ENCODE measurements at regions of chr2 and their contacts with region 1.

Region 1: GRCh38 chr2:38909872-38910271 is 20.2 kb downstream of the ARHGEF33 start:
- DNase-seq: no peak
- ATAC-seq: no peak
- H3K4me3 ChIP-seq: no peak overlapping the region
- H3K27ac ChIP-seq: no peak overlapping the region
- H3K4me1 ChIP-seq: no peaks in the 10 kb centered on the region
- H3K27me3 ChIP-seq: no peaks in the 10 kb centered on the region; a peak in 1 of 5 replicates
- CTCF ChIP-seq: no peak
- EP300 ChIP-seq: no peak
- POLR2A ChIP-seq: no peak
- RAD21 ChIP-seq: no peak

Region 2: DNA sequence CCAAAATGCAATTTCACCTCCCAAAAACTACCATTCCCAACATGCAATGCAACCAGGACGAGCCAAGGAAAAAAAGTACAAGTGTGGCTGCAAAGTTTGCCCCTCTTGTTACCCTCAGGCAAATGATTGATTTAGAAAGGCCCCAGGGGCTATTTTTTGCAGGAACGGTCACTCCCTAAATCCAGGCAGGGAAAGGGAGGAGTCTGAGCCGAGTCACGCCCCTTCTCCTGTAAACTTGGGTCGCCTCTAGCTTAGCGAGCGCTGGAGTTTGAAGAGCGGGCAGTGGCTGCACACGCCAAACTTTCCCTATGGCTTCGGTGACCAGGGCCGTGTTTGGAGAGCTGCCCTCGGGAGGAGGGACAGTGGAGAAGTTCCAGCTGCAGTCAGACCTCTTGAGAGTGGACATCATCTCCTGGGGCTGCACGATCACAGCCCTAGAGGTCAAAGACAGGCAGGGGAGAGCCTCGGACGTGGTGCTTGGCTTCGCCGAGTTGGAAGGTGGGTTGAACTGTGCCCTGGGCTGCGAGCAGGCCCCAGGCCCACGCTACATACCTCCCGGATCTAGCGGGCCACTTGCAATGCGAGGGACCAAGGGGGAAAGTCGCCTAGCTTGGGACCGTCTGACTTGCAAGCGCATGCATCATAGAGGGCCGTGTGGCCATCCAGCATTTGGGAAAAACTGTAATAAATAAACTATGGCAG is 243.9 kb before region 1 on chr2 and contains the start of gene GALM:
- CTCF ChIA-PET with region 1: no interaction called
- POLR2A ChIA-PET with region 1: no interaction called
- in situ Hi-C with region 1: no loop called
- intact Hi-C with region 1: no loop called
- DNase-seq: peak; percentile 80 to 89 (median 82)
- ATAC-seq: peak; percentile 91
- H3K4me3 ChIP-seq: peak within 1 kb of the TSS; percentile 64
- H3K27ac ChIP-seq: peak within 1 kb of the TSS; percentile 74
- H3K4me1 ChIP-seq: peaks cover 7 to 16% of the 10 kb centered on the region in 2 experiments; a peak in 4 of 5 replicates
- H3K27me3 ChIP-seq: no peaks in the 10 kb centered on the region
- CTCF ChIP-seq: no peak
- EP300 ChIP-seq: peak; percentile 62
- POLR2A ChIP-seq: peak; percentile 65
- RAD21 ChIP-seq: no peak
- polyA plus RNA-seq, gene GALM: 38.0 to 51.7 TPM

Region 3: DNA sequence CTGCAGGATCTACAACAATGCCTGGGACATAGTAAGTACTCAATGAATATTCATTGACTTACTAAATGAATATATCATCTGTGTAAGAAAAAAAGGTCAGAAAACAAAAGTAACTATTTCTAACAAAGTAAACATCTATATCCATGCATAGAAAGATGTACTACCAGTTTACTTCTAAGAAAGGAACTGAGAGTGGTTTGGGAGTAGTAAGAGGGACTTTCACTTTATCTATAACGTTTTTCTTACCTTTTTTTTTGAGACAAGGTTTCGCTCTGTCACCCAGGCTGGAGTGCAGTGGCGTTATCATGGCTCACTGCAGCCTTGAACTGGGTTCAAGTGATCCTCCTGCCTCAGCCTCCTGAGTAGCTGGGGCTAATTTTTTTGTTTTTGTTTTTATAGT is 59.8 kb before region 1 on chr2:
- CTCF ChIA-PET with region 1: no interaction called
- POLR2A ChIA-PET with region 1: no interaction called
- in situ Hi-C with region 1: no loop called
- intact Hi-C with region 1: loop called (anchors 5 kb)
- DNase-seq: no peak
- ATAC-seq: no peak
- H3K4me3 ChIP-seq: no peak overlapping the region
- H3K27ac ChIP-seq: no peak overlapping the region
- H3K4me1 ChIP-seq: no peaks in the 10 kb centered on the region
- H3K27me3 ChIP-seq: no peaks in the 10 kb centered on the region
- CTCF ChIP-seq: no peak
- EP300 ChIP-seq: no peak
- POLR2A ChIP-seq: no peak
- RAD21 ChIP-seq: no peak

Region 4: DNA sequence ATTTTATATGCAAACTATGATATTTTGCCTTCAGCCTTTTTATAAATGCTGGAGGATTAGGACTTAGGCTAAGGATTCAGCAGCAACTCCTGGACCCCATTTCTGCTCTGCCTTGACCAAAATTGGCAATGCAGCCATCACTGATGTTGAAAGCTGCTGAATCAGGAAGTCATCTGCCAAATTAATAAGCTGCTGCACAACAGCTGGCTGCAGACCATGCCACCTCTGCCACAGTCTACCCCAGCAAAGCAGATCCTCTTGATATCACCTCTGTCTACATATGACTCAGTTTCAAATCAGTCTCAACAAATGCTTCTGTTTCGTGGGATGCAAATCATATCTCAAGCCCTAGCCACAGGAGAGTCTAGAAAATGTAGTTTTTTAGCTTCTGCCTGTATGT is 218.1 kb after region 1 on chr2:
- CTCF ChIA-PET with region 1: no interaction called
- POLR2A ChIA-PET with region 1: no interaction called
- in situ Hi-C with region 1: no loop called
- intact Hi-C with region 1: no loop called
- DNase-seq: no peak
- ATAC-seq: no peak
- H3K4me3 ChIP-seq: no peak overlapping the region
- H3K27ac ChIP-seq: no peak overlapping the region
- H3K4me1 ChIP-seq: peaks cover 10 to 12% of the 10 kb centered on the region in 2 experiments; a peak in 4 of 5 replicates
- H3K27me3 ChIP-seq: no peaks in the 10 kb centered on the region
- CTCF ChIP-seq: no peak
- EP300 ChIP-seq: no peak
- POLR2A ChIP-seq: no peak
- RAD21 ChIP-seq: no peak